HAP-1 (cell line): ENCODE measurements at regions of chr19 and their contacts with region 1.

Region 1: DNA sequence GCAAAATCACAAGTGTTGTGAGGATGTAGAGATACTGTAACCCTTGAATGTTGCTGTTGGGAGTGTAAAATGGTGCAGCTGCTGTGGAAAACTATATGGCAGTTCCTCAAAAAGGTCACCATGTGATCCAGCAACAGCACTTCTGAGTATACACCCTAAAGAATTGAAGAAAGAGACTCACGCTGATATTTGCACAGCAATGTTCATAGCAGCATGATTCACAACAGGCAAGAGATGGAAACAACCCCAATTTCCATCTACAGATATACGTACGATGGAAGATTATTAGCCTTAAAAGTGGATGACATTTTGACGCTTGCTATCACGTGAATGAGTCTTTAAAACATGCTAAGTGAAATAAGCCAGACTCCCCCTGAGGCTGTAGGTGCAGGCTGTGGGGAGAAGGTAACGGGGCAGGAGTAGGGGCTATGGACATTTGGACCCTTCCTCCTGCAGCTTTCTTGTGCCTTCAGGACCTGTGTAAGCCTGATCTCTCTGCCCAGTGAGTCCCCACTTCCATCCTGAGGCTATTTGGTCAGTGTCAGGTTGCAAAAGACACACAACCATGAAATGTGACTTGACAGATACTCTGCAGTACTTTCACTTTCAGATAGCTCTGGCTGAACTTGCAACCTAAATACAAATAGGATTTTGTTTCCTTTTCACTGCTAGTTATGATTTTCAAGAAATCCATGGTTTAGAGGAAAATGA is 17.6 kb upstream of the EID2 start:
- DNase-seq: no peak
- H3K4me3 ChIP-seq: no peak overlapping the region
- H3K4me1 ChIP-seq: no peaks in the 10 kb centered on the region
- H3K27me3 ChIP-seq: peaks cover 11% of the 10 kb centered on the region; the same call in 1 of the 2 replicates

Region 2: GRCh38 chr19:39474139-39474622 is 83.4 kb before region 1 on chr19:
- in situ Hi-C with region 1: no loop called
- DNase-seq: peak; percentile 34 to 87
- H3K4me3 ChIP-seq: no peak overlapping the region
- H3K4me1 ChIP-seq: peaks cover under 1% of the 10 kb centered on the region
- H3K27me3 ChIP-seq: no peaks in the 10 kb centered on the region

Region 3: DNA sequence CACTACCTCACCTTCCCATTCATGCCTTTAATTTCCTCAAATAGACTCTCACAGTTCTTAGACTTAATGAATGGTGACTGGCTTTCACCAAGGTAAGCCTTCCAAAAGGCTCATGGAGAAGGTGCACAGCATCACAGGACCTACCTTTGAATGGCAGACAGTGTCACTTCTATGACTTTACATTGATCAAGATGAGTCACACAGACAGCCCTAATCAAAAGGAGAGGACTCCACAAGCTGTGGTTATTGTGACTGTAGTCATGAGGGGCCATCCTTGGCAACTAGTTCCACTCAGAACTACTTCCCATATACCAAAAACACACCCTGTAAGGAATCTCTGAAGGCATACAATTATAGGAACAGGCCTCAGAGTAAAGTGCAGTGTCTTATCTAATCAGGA is 104.0 kb after region 1 on chr19:
- in situ Hi-C with region 1: loop called (anchors 10 kb)
- DNase-seq: no peak
- H3K4me3 ChIP-seq: no peak overlapping the region
- H3K4me1 ChIP-seq: no peaks in the 10 kb centered on the region
- H3K27me3 ChIP-seq: no peaks in the 10 kb centered on the region; the same call in none of the 2 replicates